Heart left ventricle (tissue), 16 donors: ENCODE measurements at regions of chr3 and their contacts with region 1.

Region 1: DNA sequence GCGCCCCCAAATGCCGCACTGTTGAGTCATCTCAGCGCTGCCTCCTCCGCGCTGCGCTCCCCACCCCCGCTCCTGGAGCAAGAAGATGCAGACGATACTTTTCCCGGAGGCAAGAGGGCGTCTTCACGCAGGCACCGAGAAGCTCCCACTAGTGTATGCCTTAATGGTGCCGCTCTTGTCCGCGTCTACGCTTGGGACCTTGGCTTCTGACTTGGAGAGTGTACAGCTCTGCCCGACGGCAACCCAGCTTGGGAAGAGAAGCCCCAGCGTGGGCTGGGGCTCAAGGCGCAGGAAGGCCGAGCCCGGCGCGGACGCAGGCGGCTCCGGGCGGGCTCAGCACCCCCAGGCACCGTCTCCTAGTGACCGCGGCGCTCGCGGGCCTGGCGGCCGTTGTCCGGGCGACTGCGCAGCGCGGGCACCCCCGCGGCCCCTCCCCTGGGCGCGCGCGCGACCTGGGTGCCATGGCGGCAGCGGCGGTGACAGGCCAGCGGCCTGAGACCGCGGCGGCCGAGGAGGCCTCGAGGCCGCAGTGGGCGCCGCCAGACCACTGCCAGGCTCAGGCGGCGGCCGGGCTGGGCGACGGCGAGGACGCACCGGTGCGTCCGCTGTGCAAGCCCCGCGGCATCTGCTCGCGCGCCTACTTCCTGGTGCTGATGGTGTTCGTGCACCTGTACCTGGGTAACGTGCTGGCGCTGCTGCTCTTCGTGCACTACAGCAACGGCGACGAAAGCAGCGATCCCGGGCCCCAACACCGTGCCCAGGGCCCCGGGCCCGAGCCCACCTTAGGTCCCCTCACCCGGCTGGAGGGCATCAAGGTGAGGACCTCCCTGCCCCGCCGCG is at the start of gene P4HTM:
- DNase-seq: peak; percentile 87 to 92 (median 91)
- ATAC-seq: peak; percentile 67 to 91 (median 88)
- H3K4me3 ChIP-seq: peak within 1 kb of the TSS; percentile 63 to 95 (median 87)
- H3K27ac ChIP-seq: peak within 1 kb of the TSS; percentile 68 to 98 (median 90)
- H3K4me1 ChIP-seq: peaks cover 0 to 36% (median 22%) of the 10 kb centered on the region in 12 donors
- H3K27me3 ChIP-seq: no peaks in the 10 kb centered on the region
- CTCF ChIP-seq: peak in 9 of 12 donors; percentile 22 to 61 (median 40)
- POLR2A ChIP-seq: peak in 1 of 2 donors; percentile 51
- total RNA-seq, gene P4HTM: 22.1 to 42.7 (median 34.0) TPM

Region 2: DNA sequence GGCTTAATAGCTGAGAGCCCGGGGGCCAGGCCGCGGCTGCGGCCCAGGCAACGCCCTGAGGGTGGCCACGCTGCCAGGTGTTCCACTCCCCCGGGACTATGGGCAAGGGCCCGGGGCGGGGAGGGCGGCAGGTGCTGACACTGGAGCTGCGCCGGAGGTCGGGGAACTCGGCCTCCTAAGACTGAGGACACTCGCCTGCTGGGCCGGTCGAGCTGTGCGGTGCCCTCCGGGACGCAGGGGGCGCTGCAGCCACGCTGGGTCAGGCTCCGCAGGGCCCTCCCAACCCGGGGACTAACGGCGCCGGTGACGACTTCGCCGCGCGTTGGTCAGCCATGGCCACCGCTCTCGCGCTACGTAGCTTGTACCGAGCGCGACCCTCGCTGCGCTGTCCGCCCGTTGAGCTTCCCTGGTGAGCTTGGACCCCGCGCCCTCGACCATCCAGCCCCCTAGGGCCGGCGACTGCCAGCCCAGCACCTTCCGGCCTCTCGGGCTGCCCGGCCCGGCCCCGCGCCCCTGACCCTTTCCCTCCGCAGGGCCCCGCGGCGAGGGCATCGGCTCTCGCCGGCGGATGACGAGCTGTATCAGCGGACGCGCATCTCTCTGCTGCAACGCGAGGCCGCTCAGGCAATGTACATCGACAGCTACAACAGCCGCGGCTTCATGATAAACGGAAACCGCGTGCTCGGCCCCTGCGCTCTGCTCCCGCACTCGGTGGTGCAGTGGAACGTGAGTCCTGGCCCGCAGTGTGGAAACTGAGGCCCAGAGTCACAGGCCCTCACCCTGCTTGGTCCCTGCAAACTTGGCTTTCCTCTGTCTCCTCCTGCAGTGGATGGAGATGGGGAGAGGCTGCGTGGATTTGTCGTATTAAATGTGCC is 32.0 kb after region 1 on chr3 and contains the start of gene NDUFAF3:
- intact Hi-C with region 1: loop called in 2 of 10 experiments (anchors 1 to 2 kb)
- DNase-seq: peak; percentile 93 to 97 (median 94)
- ATAC-seq: peak; percentile 64 to 87 (median 84)
- H3K4me3 ChIP-seq: peak within 1 kb of the TSS; percentile 76 to 100 (median 92)
- H3K27ac ChIP-seq: peak within 1 kb of the TSS; percentile 99 to 100 (median 100)
- H3K4me1 ChIP-seq: peaks cover 0 to 75% (median 41%) of the 10 kb centered on the region in 12 donors
- H3K27me3 ChIP-seq: no peaks in the 10 kb centered on the region
- CTCF ChIP-seq: peak; percentile 89 to 100 (median 98)
- POLR2A ChIP-seq: peak; percentile 20 to 35
- total RNA-seq, gene NDUFAF3: 140 to 308 (median 160) TPM